ENCODE measurements at regions of chr2 and their contacts with region 1.

Region 1: DNA sequence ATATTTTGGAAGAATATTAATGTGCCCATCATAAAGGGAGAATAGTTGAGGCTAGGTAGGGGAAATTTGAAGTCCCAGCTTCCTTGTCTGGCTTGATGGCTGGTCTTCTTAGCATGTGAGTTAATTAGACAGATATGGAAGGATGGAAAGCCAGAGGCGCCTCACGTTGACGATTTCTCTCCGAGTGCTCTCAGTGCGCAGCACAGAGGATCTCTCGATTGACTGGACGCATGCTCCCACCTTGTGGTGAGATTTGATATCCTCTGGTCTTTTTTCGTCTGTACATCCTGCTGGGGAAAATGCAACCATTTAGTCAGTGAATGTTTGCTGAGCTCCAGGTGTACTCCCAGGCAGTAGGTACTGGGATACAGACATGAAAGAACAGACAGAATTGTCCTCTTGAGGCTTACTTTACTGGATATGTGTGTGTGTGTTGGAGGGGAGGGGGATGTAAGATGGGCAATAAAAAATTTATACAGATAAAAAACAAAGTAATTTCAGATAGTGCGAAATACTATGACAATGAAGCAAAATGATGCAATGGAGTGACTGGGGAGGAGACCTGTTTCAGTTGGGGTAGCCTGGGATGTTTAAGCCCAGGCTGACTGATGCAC is 66.9 kb upstream of the ZNG1B start:
- DNase-seq: peak; percentile 52
- H3K4me3 Mint-ChIP-seq: no peak overlapping the region
- H3K27ac Mint-ChIP-seq: no peak overlapping the region
- H3K4me1 Mint-ChIP-seq: peaks cover 12% of the 10 kb centered on the region
- H3K27me3 Mint-ChIP-seq: peaks cover 13% of the 10 kb centered on the region

Region 2: GRCh38 chr2:113248997-113249770 is 121.4 kb before region 1 on chr2:
- intact Hi-C with region 1: loop called (anchors 1 kb)
- DNase-seq: peak; percentile 66
- H3K4me3 Mint-ChIP-seq: no peak overlapping the region
- H3K27ac Mint-ChIP-seq: peak overlapping the region; percentile 11
- H3K4me1 Mint-ChIP-seq: peaks cover 41% of the 10 kb centered on the region
- H3K27me3 Mint-ChIP-seq: no peaks in the 10 kb centered on the region

Region 3: GRCh38 chr2:113291191-113291590 is 79.4 kb before region 1 on chr2:
- intact Hi-C with region 1: loop called (anchors 2 kb)
- DNase-seq: no peak
- H3K4me3 Mint-ChIP-seq: no peak overlapping the region
- H3K27ac Mint-ChIP-seq: no peak overlapping the region
- H3K4me1 Mint-ChIP-seq: no peaks in the 10 kb centered on the region
- H3K27me3 Mint-ChIP-seq: peaks cover 57% of the 10 kb centered on the region

Measured in activated T-helper 2 cell treated with anti-CD3 and anti-CD28 coated beads, Interferon-gamma antibody, Interleukin-2, Interleukin-4, amounts not matched to agents 10 μg/mL and 5 μg/mL and 100 μg/mL, durations not matched to agents 14 hours and 24 hours and 36 hours (primary cell).